Common myeloid progenitor, CD34-positive (primary cell): ENCODE measurements at regions of chr6 and their contacts with region 1.

Region 1: DNA sequence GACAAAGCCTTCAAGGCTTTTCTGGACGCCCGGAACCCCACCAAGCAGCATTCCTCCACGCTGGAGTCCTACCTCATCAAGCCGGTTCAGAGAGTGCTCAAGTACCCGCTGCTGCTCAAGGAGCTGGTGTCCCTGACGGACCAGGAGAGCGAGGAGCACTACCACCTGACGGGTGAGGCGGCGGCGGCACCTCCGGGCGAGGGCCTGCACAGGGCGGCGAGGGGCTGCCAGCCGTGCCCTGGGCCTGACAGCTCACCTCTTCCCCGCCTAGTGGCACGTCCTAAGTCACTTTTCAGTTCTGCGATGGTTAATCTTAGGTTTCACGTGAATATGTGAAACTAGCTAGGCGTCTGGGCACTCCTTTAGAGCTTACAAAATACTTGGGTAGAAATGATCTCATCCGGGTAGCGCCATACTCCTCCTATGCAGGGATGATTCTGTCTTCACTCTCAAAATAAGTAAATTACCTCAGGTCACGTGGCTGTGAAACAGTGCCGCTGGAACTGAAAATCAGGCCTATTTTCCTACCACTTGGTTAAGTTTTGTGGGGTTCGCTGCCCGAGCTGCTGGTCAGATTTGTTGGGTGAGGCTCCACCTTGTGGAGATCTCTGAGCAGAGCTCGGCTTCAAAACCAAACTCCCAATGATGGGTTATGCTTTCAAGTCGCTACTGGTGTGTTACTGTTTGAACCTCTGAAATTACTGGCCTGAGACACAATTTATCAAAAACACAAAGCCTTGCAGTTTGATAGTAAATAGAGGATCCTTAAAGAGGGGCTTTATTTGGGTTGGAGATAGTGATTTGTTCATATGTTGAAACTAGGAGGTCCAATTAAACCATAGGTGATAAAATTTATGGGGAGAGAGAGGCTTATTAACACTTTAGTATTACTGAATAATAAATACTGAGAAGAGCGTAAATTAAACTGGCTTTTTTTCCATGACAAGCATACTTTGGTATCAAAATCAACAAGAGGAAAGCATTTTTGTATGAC is 15.5 kb upstream of the CLDN20 start:
- DNase-seq: peak; percentile 52 to 70 (median 60)
- H3K4me3 ChIP-seq: no peak overlapping the region
- H3K27ac ChIP-seq: no peak overlapping the region
- H3K4me1 ChIP-seq: no peaks in the 10 kb centered on the region
- H3K27me3 ChIP-seq: no peaks in the 10 kb centered on the region

Region 2: DNA sequence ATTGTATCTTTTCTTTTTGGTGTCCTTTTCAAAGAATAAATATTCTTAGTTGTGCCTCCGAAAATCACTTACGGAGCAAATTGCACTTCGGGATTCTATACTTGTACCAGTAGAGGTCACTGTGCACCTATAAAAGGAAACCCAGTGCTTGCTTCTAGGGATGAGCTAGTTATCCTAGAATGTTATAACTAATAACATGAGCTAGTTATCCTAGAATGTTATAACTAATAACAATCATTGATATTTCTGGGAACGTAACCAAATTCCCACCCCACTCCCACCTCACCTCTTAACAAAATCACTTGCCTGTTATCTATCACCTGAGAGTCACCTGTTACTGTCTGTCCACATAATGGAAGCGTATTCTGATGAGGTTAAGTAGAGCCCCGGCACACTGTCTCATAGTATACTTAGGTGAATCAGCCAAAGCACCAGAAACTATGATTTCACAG is 380.1 kb before region 1 on chr6:
- CTCF ChIA-PET with region 1: interaction called, 11 read pairs
- POLR2A ChIA-PET with region 1: no interaction called
- DNase-seq: peak; percentile 52 to 71 (median 69)
- H3K4me3 ChIP-seq: no peak overlapping the region
- H3K27ac ChIP-seq: no peak overlapping the region
- H3K4me1 ChIP-seq: no peaks in the 10 kb centered on the region
- H3K27me3 ChIP-seq: no peaks in the 10 kb centered on the region

Region 3: DNA sequence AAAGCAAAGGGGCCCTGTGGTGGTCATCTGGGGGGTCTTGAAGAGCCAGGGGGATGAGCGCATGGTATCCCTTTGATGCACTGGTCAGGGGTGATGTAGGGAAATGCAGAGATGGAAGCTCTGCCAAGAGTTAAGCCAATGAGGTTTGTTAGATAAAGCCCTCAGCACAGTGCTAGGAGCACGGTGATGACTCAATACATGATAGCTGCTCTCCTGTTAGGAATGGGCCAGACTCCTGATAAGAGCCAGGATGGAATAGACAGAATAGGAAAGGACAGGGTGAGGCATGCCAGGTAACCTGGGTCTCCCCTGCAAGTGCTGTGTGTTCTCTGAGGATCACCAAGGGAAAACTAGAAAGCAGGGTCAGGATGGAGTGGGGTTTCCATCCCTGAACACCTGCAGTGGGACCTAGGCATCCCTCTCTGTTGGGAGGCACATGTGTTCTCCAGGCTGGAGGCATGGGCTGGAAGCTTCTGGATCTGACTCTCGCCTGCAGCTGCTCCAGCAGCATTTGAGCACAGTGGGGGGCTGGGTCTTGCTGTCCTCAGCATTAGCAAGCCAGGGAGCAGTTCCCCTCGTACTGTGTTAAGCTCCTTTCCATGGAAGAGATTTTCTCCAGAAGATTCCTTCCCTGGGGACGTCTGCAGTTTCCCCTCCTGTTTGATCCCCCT is 325.0 kb before region 1 on chr6:
- CTCF ChIA-PET with region 1: interaction called, 17 read pairs
- POLR2A ChIA-PET with region 1: no interaction called
- DNase-seq: no peak
- H3K4me3 ChIP-seq: no peak overlapping the region
- H3K27ac ChIP-seq: no peak overlapping the region
- H3K4me1 ChIP-seq: peaks cover 0 to 7% (median 5%) of the 10 kb centered on the region in 4 experiments
- H3K27me3 ChIP-seq: no peaks in the 10 kb centered on the region

Region 4: DNA sequence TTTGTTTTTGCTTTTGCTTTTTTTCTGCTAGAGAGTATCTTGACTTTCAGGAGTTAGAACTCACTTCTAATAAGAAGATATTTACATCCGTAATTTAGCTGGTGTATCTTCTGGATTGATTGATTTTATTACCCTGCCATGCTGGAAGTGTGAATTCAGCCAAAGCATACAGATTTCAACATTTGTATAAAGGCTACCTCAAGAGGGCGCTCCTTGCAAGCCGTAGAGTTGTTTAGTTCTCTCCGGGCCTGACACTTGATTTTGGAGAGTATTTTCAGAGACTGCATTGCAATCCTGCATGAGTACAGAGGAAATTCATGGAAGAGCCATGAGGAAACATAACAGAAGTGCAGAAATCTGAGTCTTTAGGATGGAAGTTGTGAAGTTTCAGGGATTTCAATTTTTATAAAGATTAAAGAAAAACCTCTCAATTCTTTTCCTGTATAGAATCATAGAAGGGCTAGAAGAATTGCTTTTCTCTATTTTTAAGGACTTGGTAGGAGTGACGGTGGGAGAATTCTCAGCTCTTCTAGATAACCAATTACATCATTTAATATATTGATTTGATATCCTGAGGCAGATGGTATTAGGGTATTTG is 319.9 kb before region 1 on chr6:
- CTCF ChIA-PET with region 1: interaction called, 17 read pairs
- POLR2A ChIA-PET with region 1: no interaction called
- DNase-seq: peak; percentile 61 to 82 (median 75)
- H3K4me3 ChIP-seq: no peak overlapping the region
- H3K27ac ChIP-seq: no peak overlapping the region
- H3K4me1 ChIP-seq: peaks cover 2 to 14% (median 8%) of the 10 kb centered on the region in 4 experiments
- H3K27me3 ChIP-seq: no peaks in the 10 kb centered on the region

Region 5: GRCh38 chr6:155174576-155175211 is 73.6 kb before region 1 on chr6:
- CTCF ChIA-PET with region 1: interaction called, 62 read pairs
- POLR2A ChIA-PET with region 1: no interaction called
- DNase-seq: peak; percentile 86 to 93 (median 92)
- H3K4me3 ChIP-seq: no peak overlapping the region
- H3K27ac ChIP-seq: no peak overlapping the region
- H3K4me1 ChIP-seq: peaks cover 0 to 13% (median under 1%) of the 10 kb centered on the region in 4 experiments
- H3K27me3 ChIP-seq: no peaks in the 10 kb centered on the region

Region 6: GRCh38 chr6:155894758-155895157 is 646.5 kb after region 1 on chr6:
- CTCF ChIA-PET with region 1: no interaction called
- POLR2A ChIA-PET with region 1: no interaction called
- DNase-seq: peak in 2 of 3 donors; percentile 20 to 36
- H3K4me3 ChIP-seq: no peak overlapping the region
- H3K27ac ChIP-seq: no peak overlapping the region
- H3K4me1 ChIP-seq: no peaks in the 10 kb centered on the region
- H3K27me3 ChIP-seq: no peaks in the 10 kb centered on the region